Endothelial cell of umbilical vein (primary cell): ENCODE measurements at regions of chr9 and their contacts with region 1.

Region 1: GRCh38 chr9:114385412-114386181 is 2.2 kb downstream of the AKNA start:
- DNase-seq: peak; percentile 66
- H3K4me3 ChIP-seq: no peak overlapping the region
- H3K27ac ChIP-seq: peak overlapping the region; percentile 58
- H3K4me1 ChIP-seq: peaks cover 31% of the 10 kb centered on the region
- H3K27me3 ChIP-seq: no peaks in the 10 kb centered on the region
- CTCF ChIP-seq: no peak
- POLR2A ChIP-seq: no peak

Region 2: DNA sequence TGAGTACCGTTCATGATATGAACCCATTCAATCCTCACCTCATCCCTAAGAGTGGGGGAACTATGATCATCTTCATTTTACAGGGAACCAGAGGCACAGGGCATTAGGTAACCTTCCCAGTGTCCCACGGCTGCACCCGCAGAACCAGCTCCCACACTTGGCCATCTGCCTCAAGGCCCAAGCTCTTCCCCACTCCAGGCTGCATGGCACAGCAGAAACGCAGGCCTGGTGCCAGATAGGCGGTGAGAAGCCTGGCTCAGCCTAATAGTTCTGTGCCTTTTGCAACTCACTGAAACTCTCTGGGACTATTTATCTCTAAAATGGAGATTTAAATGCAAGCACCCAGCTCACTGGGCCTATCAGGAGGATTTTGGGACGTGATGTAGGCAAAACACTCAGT is 600.3 kb before region 1 on chr9:
- CTCF ChIA-PET with region 1: no interaction called
- POLR2A ChIA-PET with region 1: no interaction called
- dilution Hi-C with region 1: no loop called
- intact Hi-C with region 1: no loop called
- DNase-seq: no peak
- H3K4me3 ChIP-seq: no peak overlapping the region
- H3K27ac ChIP-seq: no peak overlapping the region
- H3K4me1 ChIP-seq: no peaks in the 10 kb centered on the region
- H3K27me3 ChIP-seq: peaks cover 20 to 21% of the 10 kb centered on the region in 2 experiments
- CTCF ChIP-seq: no peak
- POLR2A ChIP-seq: no peak

Region 3: DNA sequence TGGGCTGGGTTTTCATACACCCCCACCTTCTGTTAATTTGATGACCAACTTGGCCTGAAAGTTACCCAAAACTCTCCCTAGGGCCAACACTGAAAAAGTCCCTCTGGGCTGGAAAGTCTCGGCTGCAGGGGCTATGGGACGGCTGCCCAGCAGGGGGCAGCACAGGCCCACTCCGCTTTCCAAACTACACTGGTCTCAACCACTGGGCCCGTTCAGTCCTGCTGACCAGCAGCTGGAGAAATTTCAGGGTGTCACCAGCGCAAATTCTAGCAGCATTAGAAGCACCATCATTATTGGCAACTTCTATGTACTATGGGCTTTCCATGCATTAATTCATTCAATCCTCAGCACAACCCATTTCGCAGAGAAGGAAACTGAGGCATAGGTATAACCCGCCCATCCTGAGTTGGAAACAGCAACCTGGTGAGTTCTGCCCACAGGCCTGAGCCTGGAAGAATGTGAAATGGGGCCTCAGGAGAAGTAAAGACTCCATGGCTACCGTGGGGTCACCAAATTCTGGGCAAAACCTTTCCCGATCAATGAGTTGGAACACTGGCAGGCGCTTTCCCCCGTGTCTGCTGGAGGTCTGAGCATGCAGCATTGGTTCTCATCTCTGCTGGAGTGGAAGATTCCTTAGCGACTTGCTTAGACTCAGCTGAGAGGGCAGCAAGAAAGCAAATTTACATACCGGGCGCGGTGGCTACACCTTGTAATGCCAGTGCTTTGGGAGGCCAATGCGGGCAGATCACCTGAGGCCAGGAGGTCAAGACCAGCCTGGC is 46.3 kb before region 1 on chr9:
- CTCF ChIA-PET with region 1: interaction called, 24 read pairs
- POLR2A ChIA-PET with region 1: no interaction called
- dilution Hi-C with region 1: no loop called
- intact Hi-C with region 1: loop called (anchors 2 kb)
- DNase-seq: peak; percentile 29
- H3K4me3 ChIP-seq: no peak overlapping the region
- H3K27ac ChIP-seq: no peak overlapping the region
- H3K4me1 ChIP-seq: no peaks in the 10 kb centered on the region
- H3K27me3 ChIP-seq: no peaks in the 10 kb centered on the region
- CTCF ChIP-seq: peak; percentile 88 to 89
- POLR2A ChIP-seq: no peak

Region 4: GRCh38 chr9:114349713-114350480 is 35.7 kb before region 1 on chr9:
- CTCF ChIA-PET with region 1: no interaction called
- POLR2A ChIA-PET with region 1: no interaction called
- dilution Hi-C with region 1: no loop called
- intact Hi-C with region 1: no loop called
- DNase-seq: no peak
- H3K4me3 ChIP-seq: no peak overlapping the region
- H3K27ac ChIP-seq: no peak overlapping the region
- H3K4me1 ChIP-seq: no peaks in the 10 kb centered on the region
- H3K27me3 ChIP-seq: no peaks in the 10 kb centered on the region
- CTCF ChIP-seq: no peak
- POLR2A ChIP-seq: no peak

Region 5: GRCh38 chr9:114397848-114398605 is 12.4 kb after region 1 on chr9:
- CTCF ChIA-PET with region 1: interaction called, 5 read pairs
- POLR2A ChIA-PET with region 1: no interaction called
- dilution Hi-C with region 1: no loop called
- intact Hi-C with region 1: loop called (anchors 1 kb)
- DNase-seq: peak; percentile 91
- H3K4me3 ChIP-seq: peak overlapping the region; percentile 38 to 54 (median 54)
- H3K27ac ChIP-seq: peak overlapping the region; percentile 32
- H3K4me1 ChIP-seq: no peaks in the 10 kb centered on the region
- H3K27me3 ChIP-seq: no peaks in the 10 kb centered on the region
- CTCF ChIP-seq: no peak
- POLR2A ChIP-seq: no peak